HepG2 (cell line): ENCODE measurements at regions of chr1 and their contacts with region 1.

Region 1: GRCh38 chr1:18480315-18481189 is at the start of gene KLHDC7A:
- DNase-seq: peak; percentile 91
- ATAC-seq: peak; percentile 97
- H3K4me3 ChIP-seq: peak within 1 kb of the TSS; percentile 45 to 68 (median 46); a peak in 5 of 6 replicates
- H3K27ac ChIP-seq: peak within 1 kb of the TSS; percentile 24
- H3K4me1 ChIP-seq: peaks cover 44% of the 10 kb centered on the region
- H3K27me3 ChIP-seq: 0 out of 5 replicates have a peak, but pooled peaks cover 0 to 3% of the 10 kb centered on the region in 2 experiments
- CTCF ChIP-seq: no peak; the same call in 1 of the 2 replicates
- EP300 ChIP-seq: peak in 1 of 2 experiments; percentile 32; a peak in 1 of 4 replicates
- POLR2A ChIP-seq: peak; percentile 44 to 70; a peak in 2 of 4 replicates
- RAD21 ChIP-seq: no peak; the same call in 1 of the 2 replicates
- total RNA-seq, gene KLHDC7A: 0.53 and 1.8 TPM in 2 replicates

Region 2: GRCh38 chr1:17700945-17701810 is 779.4 kb before region 1 on chr1:
- CTCF ChIA-PET with region 1: no interaction called
- POLR2A ChIA-PET with region 1: no interaction called
- in situ Hi-C with region 1: no loop called
- intact Hi-C with region 1: loop called (anchors 10 kb)
- DNase-seq: no peak
- ATAC-seq: peak; percentile 19
- H3K4me3 ChIP-seq: peak overlapping the region in 2 of 3 experiments; percentile 31 to 50; a peak in 3 of 6 replicates
- H3K27ac ChIP-seq: no peak overlapping the region
- H3K4me1 ChIP-seq: peaks cover 24% of the 10 kb centered on the region
- H3K27me3 ChIP-seq: peaks cover 7 to 44% of the 10 kb centered on the region in 2 experiments; a peak in 3 of 5 replicates
- CTCF ChIP-seq: no peak
- EP300 ChIP-seq: no peak
- POLR2A ChIP-seq: no peak
- RAD21 ChIP-seq: no peak

Region 3: DNA sequence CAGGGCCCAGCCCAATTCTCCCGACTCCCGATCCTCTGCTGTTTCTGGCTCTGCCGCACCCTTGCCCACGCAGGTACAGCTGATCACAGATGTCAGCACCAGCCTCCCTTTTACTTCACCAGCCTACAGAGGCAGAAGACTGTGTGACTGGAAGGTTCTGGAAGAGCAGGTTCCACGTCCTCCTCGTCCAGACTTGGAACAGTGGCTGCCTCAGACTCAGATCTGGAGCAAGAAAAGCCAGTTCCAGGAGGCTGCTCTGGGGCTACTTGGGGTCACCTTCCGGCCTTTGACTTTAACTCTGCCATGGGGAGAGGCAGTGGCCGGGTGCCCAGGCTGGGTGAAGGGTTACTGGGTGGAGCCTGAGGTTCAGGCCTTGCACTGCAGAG is 15.9 kb before region 1 on chr1:
- CTCF ChIA-PET with region 1: no interaction called
- POLR2A ChIA-PET with region 1: interaction called, 10 read pairs
- in situ Hi-C with region 1: no loop called
- intact Hi-C with region 1: no loop called
- DNase-seq: no peak
- ATAC-seq: peak; percentile 56
- H3K4me3 ChIP-seq: no peak overlapping the region
- H3K27ac ChIP-seq: no peak overlapping the region
- H3K4me1 ChIP-seq: peaks cover 12% of the 10 kb centered on the region
- H3K27me3 ChIP-seq: peaks cover 4 to 17% of the 10 kb centered on the region in 2 experiments; a peak in 2 of 5 replicates
- CTCF ChIP-seq: no peak
- EP300 ChIP-seq: no peak
- POLR2A ChIP-seq: no peak
- RAD21 ChIP-seq: no peak

Region 4: DNA sequence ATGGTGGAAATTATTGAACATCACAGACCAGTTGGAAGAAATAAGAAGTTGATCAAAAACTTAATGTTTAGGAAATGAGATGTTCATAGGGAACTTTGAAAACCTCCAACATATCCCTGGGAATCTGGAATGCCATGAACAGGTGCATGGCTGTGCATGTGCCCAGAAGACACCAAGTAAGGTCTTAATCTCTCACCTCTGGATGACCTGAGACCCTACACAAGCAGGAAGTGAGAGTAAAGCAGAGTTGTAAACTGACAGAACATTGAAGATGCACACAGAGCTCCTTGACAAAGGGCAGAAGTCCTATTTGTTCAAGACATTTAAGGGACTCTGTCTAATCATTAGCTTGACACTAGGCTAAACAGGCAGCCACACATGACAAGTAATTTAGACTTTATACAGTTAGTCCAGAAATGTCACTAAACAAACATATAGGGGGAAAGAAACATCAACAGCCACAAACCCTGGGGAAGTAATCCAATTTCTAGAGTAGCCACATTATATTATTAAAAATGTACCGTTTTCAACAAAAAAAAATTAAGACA is 34.6 kb after region 1 on chr1:
- CTCF ChIA-PET with region 1: no interaction called
- POLR2A ChIA-PET with region 1: interaction called, 3 read pairs
- in situ Hi-C with region 1: no loop called
- intact Hi-C with region 1: loop called (anchors 1 kb)
- DNase-seq: peak; percentile 20
- ATAC-seq: peak; percentile 65
- H3K4me3 ChIP-seq: no peak overlapping the region
- H3K27ac ChIP-seq: peak overlapping the region; percentile 23
- H3K4me1 ChIP-seq: peaks cover 20% of the 10 kb centered on the region
- H3K27me3 ChIP-seq: no peaks in the 10 kb centered on the region
- CTCF ChIP-seq: no peak
- EP300 ChIP-seq: peak in 1 of 2 experiments; percentile 42; a peak in 1 of 4 replicates
- POLR2A ChIP-seq: no peak
- RAD21 ChIP-seq: no peak